GM23248 (cell line): ENCODE measurements at regions of chr18 and their contacts with region 1.

Region 1: GRCh38 chr18:457140-457519 is 43.4 kb downstream of the COLEC12 start:
- DNase-seq: peak; percentile 85
- H3K4me3 ChIP-seq: peak overlapping the region; percentile 48
- H3K27ac ChIP-seq: peak overlapping the region; percentile 65
- H3K4me1 ChIP-seq: peaks cover 25% of the 10 kb centered on the region
- H3K27me3 ChIP-seq: no peaks in the 10 kb centered on the region

Region 2: DNA sequence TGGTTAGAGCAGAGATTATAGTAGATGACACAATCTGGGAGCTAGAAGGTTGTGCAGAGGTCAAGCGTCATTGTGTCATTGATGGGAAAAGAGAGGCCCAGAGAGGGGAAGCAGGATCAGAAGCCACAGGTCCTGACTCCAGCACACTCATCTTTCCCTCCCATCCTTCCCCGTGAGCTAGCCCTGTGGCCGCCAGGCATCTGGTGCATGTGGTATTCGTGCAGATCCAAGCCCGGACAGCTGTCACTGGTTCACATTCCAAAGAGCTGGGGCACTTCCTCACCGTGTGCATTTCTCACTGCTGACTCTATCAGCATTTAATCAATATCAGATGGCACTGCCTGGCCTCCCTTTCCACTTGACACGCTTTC is 95.2 kb before region 1 on chr18:
- in situ Hi-C with region 1: loop called (anchors 10 kb)
- DNase-seq: peak; percentile 98
- H3K4me3 ChIP-seq: peak overlapping the region; percentile 44; the same call in 1 of the 2 replicates
- H3K27ac ChIP-seq: peak overlapping the region; percentile 93
- H3K4me1 ChIP-seq: peaks cover 47% of the 10 kb centered on the region
- H3K27me3 ChIP-seq: no peaks in the 10 kb centered on the region

Region 3: DNA sequence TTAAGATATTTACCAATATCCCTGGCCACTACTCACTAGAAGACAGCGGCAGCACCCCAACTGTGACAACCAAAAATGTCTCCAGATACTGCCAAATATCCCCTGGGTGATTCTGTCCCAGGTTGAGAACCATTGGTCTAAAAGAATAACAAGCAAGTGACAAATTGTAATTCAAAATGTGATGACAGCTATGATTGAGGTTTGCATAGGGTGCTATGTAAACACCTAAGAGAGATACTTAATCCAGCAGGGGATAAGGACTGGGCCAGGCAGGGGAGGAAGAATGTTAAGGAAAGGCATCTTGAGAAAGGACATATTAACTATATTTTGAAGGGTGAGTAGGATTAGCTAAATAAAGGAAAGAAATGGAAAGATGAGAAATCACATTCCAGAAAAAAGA is 293.3 kb after region 1 on chr18:
- in situ Hi-C with region 1: no loop called
- DNase-seq: no peak
- H3K4me3 ChIP-seq: no peak overlapping the region
- H3K27ac ChIP-seq: no peak overlapping the region
- H3K4me1 ChIP-seq: no peaks in the 10 kb centered on the region
- H3K27me3 ChIP-seq: no peaks in the 10 kb centered on the region